Activated T-helper 1 cell treated with anti-CD3 and anti-CD28 coated beads, Interleukin-12 subunit alpha, Interleukin-12 subunit beta, Interleukin-2, Interleukin-4 antibody, amounts not matched to agents 30 ng/mL and 10 ng/mL and 1 ng/mL, durations not matched to agents 14 hours and 24 hours and 36 hours (primary cell): ENCODE measurements at regions of chr2 and their contacts with region 1.

Region 1: GRCh38 chr2:129558558-129558957 is 420.9 kb upstream of the RAB6C start:
- DNase-seq: no peak
- H3K4me3 Mint-ChIP-seq: no peak overlapping the region
- H3K27ac Mint-ChIP-seq: no peak overlapping the region
- H3K4me1 Mint-ChIP-seq: no peaks in the 10 kb centered on the region
- H3K27me3 Mint-ChIP-seq: no peaks in the 10 kb centered on the region

Region 2: DNA sequence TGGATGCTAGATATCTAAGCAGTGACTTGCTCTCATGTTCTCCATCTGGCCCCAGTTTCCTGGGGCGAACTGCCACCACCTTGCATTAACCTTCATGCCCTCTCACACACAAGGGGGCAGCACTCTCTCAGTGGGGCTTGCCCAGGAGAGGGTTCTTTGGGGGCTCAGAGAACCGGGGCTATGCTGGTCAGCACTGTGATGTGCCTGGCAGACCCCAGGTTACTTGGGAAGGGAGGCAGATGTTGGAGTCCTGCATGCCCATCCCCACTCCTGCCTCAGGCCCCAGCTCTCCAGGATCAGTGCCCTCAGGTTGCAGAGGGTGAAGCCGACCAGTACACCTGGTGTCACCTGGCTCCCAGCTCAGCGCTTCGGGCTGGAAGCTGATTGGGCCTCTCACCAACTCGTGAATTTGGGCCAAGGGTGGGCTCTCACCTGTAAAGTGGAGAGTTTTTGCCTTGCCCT is 843.7 kb before region 1 on chr2:
- intact Hi-C with region 1: no loop called
- DNase-seq: no peak
- H3K4me3 Mint-ChIP-seq: no peak overlapping the region
- H3K27ac Mint-ChIP-seq: no peak overlapping the region
- H3K4me1 Mint-ChIP-seq: no peaks in the 10 kb centered on the region
- H3K27me3 Mint-ChIP-seq: peaks cover 15% of the 10 kb centered on the region

Region 3: DNA sequence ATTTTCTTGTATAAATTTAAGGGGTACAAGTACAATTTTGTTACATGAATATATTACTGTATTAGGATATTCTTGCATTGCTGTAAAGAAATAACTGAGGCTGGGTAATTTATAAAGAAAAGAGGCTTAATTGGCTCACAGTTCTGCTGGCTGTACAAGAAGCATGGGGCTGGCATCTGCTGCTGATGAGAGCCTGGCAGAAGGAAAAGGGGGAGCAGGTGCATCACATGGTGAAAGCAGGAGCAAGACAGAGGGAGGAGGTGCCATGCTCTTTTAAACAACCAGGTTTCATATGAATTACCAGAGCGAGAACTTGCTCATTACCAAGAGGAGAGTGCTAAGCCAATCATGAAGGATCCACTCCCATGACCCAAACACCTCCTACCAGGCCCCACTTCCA is 21.4 kb after region 1 on chr2:
- intact Hi-C with region 1: loop called (anchors 1 kb)
- DNase-seq: no peak
- H3K4me3 Mint-ChIP-seq: no peak overlapping the region
- H3K27ac Mint-ChIP-seq: no peak overlapping the region
- H3K4me1 Mint-ChIP-seq: no peaks in the 10 kb centered on the region
- H3K27me3 Mint-ChIP-seq: no peaks in the 10 kb centered on the region

Region 4: DNA sequence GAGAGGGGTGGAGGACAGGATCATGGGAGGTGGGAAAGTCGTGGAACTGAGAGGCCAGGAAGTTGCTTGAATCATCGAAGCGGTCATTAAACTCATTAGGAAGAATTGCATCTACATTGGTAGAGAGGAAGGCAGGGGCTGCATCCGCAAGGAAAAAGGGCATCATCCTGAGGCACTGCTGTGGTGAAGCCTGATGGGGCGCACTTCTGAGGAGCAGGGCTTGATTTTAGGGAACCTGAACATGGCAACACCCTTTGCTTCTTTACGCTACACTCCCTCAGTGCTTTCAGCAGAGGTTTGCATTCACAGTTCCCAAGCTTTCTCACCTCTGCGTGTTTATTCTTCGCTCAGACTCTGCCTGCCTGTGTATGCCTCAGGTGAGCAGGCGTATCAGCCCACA is 68.9 kb after region 1 on chr2:
- intact Hi-C with region 1: no loop called
- DNase-seq: no peak
- H3K4me3 Mint-ChIP-seq: no peak overlapping the region
- H3K27ac Mint-ChIP-seq: no peak overlapping the region
- H3K4me1 Mint-ChIP-seq: no peaks in the 10 kb centered on the region
- H3K27me3 Mint-ChIP-seq: peaks cover 2% of the 10 kb centered on the region